H1 (cell line): ENCODE measurements at regions of chr3 and their contacts with region 1.

Region 1: GRCh38 chr3:142597906-142598305 is 1.7 kb downstream of the PLS1 start:
- DNase-seq: no peak
- H3K4me3 ChIP-seq: peak overlapping the region in 1 of 4 experiments; percentile 79; a peak in 3 of 8 replicates
- H3K27ac ChIP-seq: no peak overlapping the region
- H3K4me1 ChIP-seq: peaks cover 0 to 4% (median 2%) of the 10 kb centered on the region in 4 experiments; a peak in 2 of 7 replicates
- H3K27me3 ChIP-seq: no peaks in the 10 kb centered on the region
- CTCF ChIP-seq: no peak
- EP300 ChIP-seq: no peak
- POLR2A ChIP-seq: no peak
- RAD21 ChIP-seq: no peak

Region 2: GRCh38 chr3:142608645-142609535 is 11.0 kb after region 1 on chr3:
- CTCF ChIA-PET with region 1: interaction called, 11 read pairs
- POLR2A ChIA-PET with region 1: interaction called, 4 read pairs
- DNase-seq: no peak
- H3K4me3 ChIP-seq: no peak overlapping the region
- H3K27ac ChIP-seq: no peak overlapping the region
- H3K4me1 ChIP-seq: no peaks in the 10 kb centered on the region
- H3K27me3 ChIP-seq: no peaks in the 10 kb centered on the region
- CTCF ChIP-seq: no peak
- EP300 ChIP-seq: no peak
- POLR2A ChIP-seq: no peak
- RAD21 ChIP-seq: no peak

Region 3: GRCh38 chr3:142628801-142629200 is 30.9 kb after region 1 on chr3:
- CTCF ChIA-PET with region 1: no interaction called
- POLR2A ChIA-PET with region 1: no interaction called
- DNase-seq: no peak
- H3K4me3 ChIP-seq: no peak overlapping the region
- H3K27ac ChIP-seq: no peak overlapping the region
- H3K4me1 ChIP-seq: no peaks in the 10 kb centered on the region
- H3K27me3 ChIP-seq: no peaks in the 10 kb centered on the region
- CTCF ChIP-seq: no peak
- EP300 ChIP-seq: no peak
- POLR2A ChIP-seq: no peak
- RAD21 ChIP-seq: no peak